CD4-positive, alpha-beta memory T cell (primary cell): ENCODE measurements at regions of chr4 and their contacts with region 1.

Region 1: GRCh38 chr4:99054428-99054994 is 34.1 kb downstream of the ADH5 start:
- DNase-seq: no peak
- H3K4me3 ChIP-seq: no peak overlapping the region
- H3K4me3 Mint-ChIP-seq: no peak overlapping the region
- H3K27ac ChIP-seq: no peak overlapping the region
- H3K27ac Mint-ChIP-seq: peak overlapping the region in 5 of 7 donors; percentile 37 to 88 (median 86)
- H3K4me1 ChIP-seq: peaks cover 7% of the 10 kb centered on the region
- H3K4me1 Mint-ChIP-seq: peaks cover 15 to 33% (median 23%) of the 10 kb centered on the region in 4 donors
- H3K27me3 ChIP-seq: no peaks in the 10 kb centered on the region
- H3K27me3 Mint-ChIP-seq: no peaks in the 10 kb centered on the region

Region 2: DNA sequence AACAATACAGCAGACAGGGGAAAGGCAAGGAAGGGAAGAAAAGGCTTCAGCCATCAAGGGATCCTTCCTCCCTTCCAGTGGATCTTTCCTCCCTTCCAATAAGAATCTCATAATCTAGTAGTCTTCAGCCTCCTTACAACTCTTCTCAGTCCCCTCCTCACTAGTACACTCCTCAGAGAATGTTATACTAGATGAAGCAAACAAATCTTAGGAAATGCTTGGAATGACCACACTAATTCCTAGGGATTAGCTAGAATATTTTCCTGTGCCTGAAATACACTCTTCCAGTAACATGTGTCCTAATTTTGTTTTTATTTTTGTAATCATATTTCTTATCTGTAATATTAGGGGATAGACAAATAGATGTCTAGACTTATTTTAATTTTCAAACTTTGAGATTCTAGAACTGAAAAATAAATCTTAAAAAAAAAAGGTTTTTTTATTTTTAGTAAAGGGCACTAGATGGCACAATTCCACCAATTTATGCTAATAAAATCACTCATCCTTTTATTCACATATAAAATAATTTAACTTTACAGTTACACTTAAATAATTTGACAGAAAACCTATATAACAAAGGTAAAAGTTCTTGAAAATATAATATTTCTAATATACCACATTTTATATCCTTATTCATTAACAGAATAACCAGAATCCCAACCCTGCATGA is 904.3 kb before region 1 on chr4:
- CTCF ChIA-PET with region 1: interaction called, 10 read pairs
- POLR2A ChIA-PET with region 1: interaction called, 3 read pairs
- intact Hi-C with region 1: loop called (anchors 1 kb)
- DNase-seq: peak in 1 of 5 donors; percentile 3
- H3K4me3 ChIP-seq: no peak overlapping the region
- H3K4me3 Mint-ChIP-seq: no peak overlapping the region
- H3K27ac ChIP-seq: no peak overlapping the region
- H3K27ac Mint-ChIP-seq: no peak overlapping the region
- H3K4me1 ChIP-seq: peaks cover 16% of the 10 kb centered on the region
- H3K4me1 Mint-ChIP-seq: peaks cover 5 to 18% (median 9%) of the 10 kb centered on the region in 4 donors
- H3K27me3 ChIP-seq: no peaks in the 10 kb centered on the region
- H3K27me3 Mint-ChIP-seq: peaks cover 0 to 1% of the 10 kb centered on the region in 2 donors

Region 3: DNA sequence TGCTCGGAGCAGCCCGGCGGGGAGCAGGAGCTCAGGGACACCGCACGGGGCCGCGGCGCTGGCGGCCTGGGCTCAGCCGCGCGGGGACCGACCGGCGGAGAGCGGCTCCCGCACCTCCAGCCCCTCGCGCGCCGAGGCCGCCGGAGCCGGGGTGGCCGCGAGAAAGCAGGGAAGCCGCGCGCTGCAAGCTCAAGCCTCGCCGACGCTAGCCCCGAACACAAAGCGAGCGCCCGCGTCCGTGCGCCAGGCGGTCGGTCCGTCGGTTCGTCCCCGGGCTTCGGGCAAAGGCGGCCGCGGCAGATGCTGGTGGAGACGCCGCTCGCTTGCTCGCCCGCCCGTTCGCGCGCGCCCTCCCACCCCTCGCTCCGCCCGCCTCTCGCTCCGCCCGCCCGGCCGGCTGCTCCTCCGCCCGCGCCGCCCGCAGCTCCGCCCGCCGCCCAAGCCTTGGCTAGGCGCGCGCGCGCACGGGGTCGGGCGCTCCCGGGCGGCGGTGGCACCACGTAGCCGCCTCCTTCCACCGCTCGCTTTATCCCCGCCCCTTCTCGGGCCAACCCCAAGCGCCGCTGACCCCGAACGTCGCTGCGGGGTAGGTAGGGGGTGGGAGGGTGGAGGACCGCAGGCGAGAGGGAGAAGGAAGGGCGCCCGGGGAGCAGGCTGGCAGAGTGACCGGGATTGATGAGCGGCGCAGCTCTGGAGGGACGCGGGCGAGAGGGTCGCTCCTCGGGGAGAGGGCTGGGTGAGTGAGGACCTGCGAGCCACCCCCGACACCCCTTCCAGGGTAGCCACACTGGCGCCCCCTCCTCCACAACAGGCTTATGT is 396.0 kb before region 1 on chr4 and contains the start of gene TSPAN5:
- CTCF ChIA-PET with region 1: interaction called, 3 read pairs
- POLR2A ChIA-PET with region 1: no interaction called
- intact Hi-C with region 1: loop called (anchors 5 kb)
- DNase-seq: peak; percentile 77 to 83 (median 80)
- H3K4me3 ChIP-seq: peak within 1 kb of the TSS; percentile 95 to 99
- H3K4me3 Mint-ChIP-seq: peak within 1 kb of the TSS; percentile 91 to 100 (median 96)
- H3K27ac ChIP-seq: peak within 1 kb of the TSS; percentile 60
- H3K27ac Mint-ChIP-seq: peak within 1 kb of the TSS; percentile 59 to 96 (median 92)
- H3K4me1 ChIP-seq: peaks cover 82% of the 10 kb centered on the region
- H3K4me1 Mint-ChIP-seq: peaks cover 55 to 91% (median 74%) of the 10 kb centered on the region in 4 donors
- H3K27me3 ChIP-seq: no peaks in the 10 kb centered on the region
- H3K27me3 Mint-ChIP-seq: no peaks in the 10 kb centered on the region
- total RNA-seq, gene TSPAN5: 16.8 to 17.4 TPM

Region 4: GRCh38 chr4:98939892-98940298 is 114.6 kb before region 1 on chr4:
- CTCF ChIA-PET with region 1: interaction called, 15 read pairs
- POLR2A ChIA-PET with region 1: no interaction called
- intact Hi-C with region 1: loop called (anchors 1 kb)
- DNase-seq: peak in 4 of 5 donors; percentile 21 to 32 (median 26)
- H3K4me3 ChIP-seq: no peak overlapping the region
- H3K4me3 Mint-ChIP-seq: no peak overlapping the region
- H3K27ac ChIP-seq: no peak overlapping the region
- H3K27ac Mint-ChIP-seq: no peak overlapping the region
- H3K4me1 ChIP-seq: no peaks in the 10 kb centered on the region
- H3K4me1 Mint-ChIP-seq: peaks cover 0 to 12% (median 5%) of the 10 kb centered on the region in 4 donors
- H3K27me3 ChIP-seq: no peaks in the 10 kb centered on the region
- H3K27me3 Mint-ChIP-seq: no peaks in the 10 kb centered on the region

Region 5: DNA sequence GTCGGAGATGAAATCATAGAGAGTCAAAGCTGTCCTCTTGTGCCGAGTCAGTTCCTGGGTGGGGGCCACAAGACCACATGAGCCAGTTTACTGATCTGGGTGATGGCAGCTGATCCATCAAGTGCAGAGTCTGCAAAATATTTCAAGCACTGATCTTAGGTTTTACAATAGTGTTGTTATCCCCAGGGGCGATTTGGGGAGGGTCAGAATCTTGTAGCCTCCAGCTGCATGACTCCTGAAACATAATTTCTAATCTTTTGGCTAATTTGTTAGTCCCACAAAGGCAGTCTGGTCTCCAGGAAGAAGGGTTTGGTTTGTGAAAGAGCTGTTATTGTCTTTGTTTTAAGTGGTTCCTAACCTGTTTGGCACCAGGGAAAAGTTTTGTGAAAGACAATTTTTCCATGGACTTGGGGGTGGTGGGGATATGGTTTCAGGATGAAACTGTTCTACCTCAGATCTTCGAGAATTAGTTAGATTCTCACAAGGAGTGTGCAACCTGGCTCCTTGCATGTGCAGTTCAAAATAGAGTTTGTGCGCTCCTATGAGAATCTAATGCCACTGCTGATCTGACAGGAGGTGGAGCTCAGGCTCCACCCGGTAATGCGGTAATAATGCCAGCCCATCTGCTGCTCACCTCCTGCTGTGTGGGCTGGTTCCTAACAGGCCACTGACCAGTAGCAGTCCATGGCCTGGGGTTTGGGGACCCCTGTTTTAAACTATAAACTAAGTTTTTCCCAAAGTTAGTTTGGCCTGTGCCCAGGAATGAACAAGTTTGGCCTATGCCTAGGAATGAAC is 29.8 kb before region 1 on chr4:
- CTCF ChIA-PET with region 1: interaction called, 19 read pairs
- POLR2A ChIA-PET with region 1: no interaction called
- intact Hi-C with region 1: no loop called
- DNase-seq: no peak
- H3K4me3 ChIP-seq: no peak overlapping the region
- H3K4me3 Mint-ChIP-seq: peak overlapping the region in 1 of 8 donors; percentile 27
- H3K27ac ChIP-seq: no peak overlapping the region
- H3K27ac Mint-ChIP-seq: peak overlapping the region in 6 of 7 donors; percentile 36 to 78 (median 54)
- H3K4me1 ChIP-seq: peaks cover 39% of the 10 kb centered on the region
- H3K4me1 Mint-ChIP-seq: peaks cover 46 to 81% (median 59%) of the 10 kb centered on the region in 4 donors
- H3K27me3 ChIP-seq: no peaks in the 10 kb centered on the region
- H3K27me3 Mint-ChIP-seq: no peaks in the 10 kb centered on the region

Region 6: DNA sequence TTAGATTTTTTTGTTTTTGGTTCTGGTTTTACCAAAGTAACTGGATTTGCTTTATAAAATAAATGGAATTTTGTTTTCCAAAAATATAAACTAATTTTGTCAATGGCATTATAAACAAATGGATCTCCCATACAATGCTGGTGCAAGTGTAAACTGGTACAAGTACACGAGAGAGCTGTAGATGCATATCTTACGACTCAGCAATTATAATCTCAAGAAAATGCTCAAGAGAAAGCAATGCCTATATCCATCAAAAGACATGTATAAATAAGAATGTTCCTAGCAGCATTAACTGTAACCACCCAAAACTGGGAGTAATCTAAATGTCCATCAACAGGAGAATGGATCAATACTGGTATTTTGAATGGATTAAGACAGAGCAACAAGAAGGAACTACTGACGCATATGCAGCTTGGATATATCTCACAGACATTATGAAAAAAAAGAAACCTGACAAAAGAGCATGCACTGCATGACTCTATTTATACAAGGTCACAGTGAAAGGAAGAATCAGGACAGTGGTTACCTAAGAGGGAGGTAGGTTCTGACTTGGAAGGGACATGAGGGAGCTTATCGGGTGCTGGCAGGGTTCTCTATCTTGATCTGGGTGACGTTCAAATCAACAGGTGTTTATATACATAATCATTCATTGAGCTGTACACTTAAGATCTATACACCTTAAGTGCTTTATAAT is 24.6 kb after region 1 on chr4:
- CTCF ChIA-PET with region 1: interaction called, 13 read pairs
- POLR2A ChIA-PET with region 1: no interaction called
- intact Hi-C with region 1: no loop called
- DNase-seq: no peak
- H3K4me3 ChIP-seq: no peak overlapping the region
- H3K4me3 Mint-ChIP-seq: no peak overlapping the region
- H3K27ac ChIP-seq: no peak overlapping the region
- H3K27ac Mint-ChIP-seq: peak overlapping the region in 1 of 7 donors; percentile 72
- H3K4me1 ChIP-seq: no peaks in the 10 kb centered on the region
- H3K4me1 Mint-ChIP-seq: peaks cover 5 to 18% (median 14%) of the 10 kb centered on the region in 4 donors
- H3K27me3 ChIP-seq: no peaks in the 10 kb centered on the region
- H3K27me3 Mint-ChIP-seq: no peaks in the 10 kb centered on the region

Region 7: DNA sequence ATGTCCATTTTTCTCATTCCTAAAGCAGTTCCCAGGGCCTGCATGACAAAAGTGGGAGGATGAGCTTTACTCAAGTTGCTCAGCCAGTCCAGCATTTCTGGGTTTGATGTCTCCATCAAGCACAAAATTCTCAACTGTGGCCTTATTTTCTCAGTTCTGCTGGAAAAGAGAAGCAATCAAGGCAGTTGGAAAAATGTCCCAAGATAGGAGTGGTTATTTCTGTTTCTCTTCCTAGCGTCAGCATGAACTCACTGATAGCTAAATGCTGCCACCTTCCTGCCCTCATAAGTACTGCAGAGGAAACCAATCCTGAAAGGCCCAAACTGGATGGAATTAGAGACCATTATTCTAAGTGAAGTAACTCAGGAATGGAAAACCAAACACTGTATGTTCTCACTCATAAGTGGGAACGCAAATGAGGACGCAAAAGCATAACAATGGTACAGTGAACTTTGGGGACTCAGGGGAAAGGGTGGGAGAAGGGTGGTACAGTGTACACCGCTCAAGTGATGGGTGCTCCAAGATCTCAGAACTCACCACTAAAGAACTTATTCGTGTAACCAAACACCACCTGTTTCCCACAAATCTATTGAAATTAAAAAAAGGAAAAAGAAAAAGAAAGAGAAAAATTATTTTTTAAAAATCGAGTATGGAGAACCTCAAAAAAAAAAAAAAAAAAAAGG is 351.1 kb after region 1 on chr4:
- CTCF ChIA-PET with region 1: interaction called, 4 read pairs
- POLR2A ChIA-PET with region 1: no interaction called
- intact Hi-C with region 1: loop called (anchors 5 kb)
- DNase-seq: peak; percentile 43 to 60 (median 49)
- H3K4me3 ChIP-seq: no peak overlapping the region
- H3K4me3 Mint-ChIP-seq: no peak overlapping the region
- H3K27ac ChIP-seq: no peak overlapping the region
- H3K27ac Mint-ChIP-seq: no peak overlapping the region
- H3K4me1 ChIP-seq: no peaks in the 10 kb centered on the region
- H3K4me1 Mint-ChIP-seq: peaks cover 0 to 4% (median 2%) of the 10 kb centered on the region in 4 donors
- H3K27me3 ChIP-seq: no peaks in the 10 kb centered on the region
- H3K27me3 Mint-ChIP-seq: peaks cover 0 to 1% of the 10 kb centered on the region in 2 donors

Region 8: DNA sequence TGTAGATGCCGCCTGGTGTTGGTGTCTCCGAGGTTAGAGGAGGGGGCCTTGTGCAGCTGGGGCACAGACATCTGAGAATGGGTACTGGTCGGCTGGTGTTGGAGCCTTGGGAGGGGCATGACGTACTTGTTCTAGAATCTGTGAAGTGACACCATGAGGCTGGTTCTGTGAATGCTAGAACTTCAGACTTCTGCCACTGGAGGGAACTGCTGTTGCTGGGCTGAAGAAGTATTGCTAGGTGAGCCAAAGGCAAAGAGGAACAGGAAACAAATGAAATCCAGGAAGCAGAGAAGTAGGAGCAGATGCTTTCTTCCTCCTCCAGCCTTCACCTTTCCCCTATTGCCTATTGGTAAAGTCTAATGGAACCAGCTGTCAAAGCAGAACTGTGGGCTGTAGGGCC is 1256.7 kb after region 1 on chr4:
- CTCF ChIA-PET with region 1: no interaction called
- POLR2A ChIA-PET with region 1: no interaction called
- intact Hi-C with region 1: no loop called
- DNase-seq: no peak
- H3K4me3 ChIP-seq: no peak overlapping the region
- H3K4me3 Mint-ChIP-seq: no peak overlapping the region
- H3K27ac ChIP-seq: no peak overlapping the region
- H3K27ac Mint-ChIP-seq: no peak overlapping the region
- H3K4me1 ChIP-seq: no peaks in the 10 kb centered on the region
- H3K4me1 Mint-ChIP-seq: no peaks in the 10 kb centered on the region
- H3K27me3 ChIP-seq: no peaks in the 10 kb centered on the region
- H3K27me3 Mint-ChIP-seq: peaks cover 7 to 10% of the 10 kb centered on the region in 2 donors